A549 (cell line): ENCODE measurements at regions of chr5 and their contacts with region 1.

Region 1: GRCh38 chr5:172770675-172771438 is at the start of gene DUSP1:
- DNase-seq: peak; percentile 92 to 99
- ATAC-seq: peak; percentile 32 to 50
- H3K4me3 ChIP-seq: peak within 1 kb of the TSS; percentile 75
- H3K27ac ChIP-seq: peak within 1 kb of the TSS; percentile 97 to 100
- H3K4me1 ChIP-seq: peaks cover 42% of the 10 kb centered on the region
- CTCF ChIP-seq: peak; percentile 27; the same call in 1 of the 3 replicates
- EP300 ChIP-seq: peak; percentile 89 to 96
- POLR2A ChIP-seq: peak; percentile 99
- RAD21 ChIP-seq: peak; percentile 8 to 52
- polyA plus RNA-seq, gene DUSP1: 525 and 594 TPM in 2 replicates

Region 2: DNA sequence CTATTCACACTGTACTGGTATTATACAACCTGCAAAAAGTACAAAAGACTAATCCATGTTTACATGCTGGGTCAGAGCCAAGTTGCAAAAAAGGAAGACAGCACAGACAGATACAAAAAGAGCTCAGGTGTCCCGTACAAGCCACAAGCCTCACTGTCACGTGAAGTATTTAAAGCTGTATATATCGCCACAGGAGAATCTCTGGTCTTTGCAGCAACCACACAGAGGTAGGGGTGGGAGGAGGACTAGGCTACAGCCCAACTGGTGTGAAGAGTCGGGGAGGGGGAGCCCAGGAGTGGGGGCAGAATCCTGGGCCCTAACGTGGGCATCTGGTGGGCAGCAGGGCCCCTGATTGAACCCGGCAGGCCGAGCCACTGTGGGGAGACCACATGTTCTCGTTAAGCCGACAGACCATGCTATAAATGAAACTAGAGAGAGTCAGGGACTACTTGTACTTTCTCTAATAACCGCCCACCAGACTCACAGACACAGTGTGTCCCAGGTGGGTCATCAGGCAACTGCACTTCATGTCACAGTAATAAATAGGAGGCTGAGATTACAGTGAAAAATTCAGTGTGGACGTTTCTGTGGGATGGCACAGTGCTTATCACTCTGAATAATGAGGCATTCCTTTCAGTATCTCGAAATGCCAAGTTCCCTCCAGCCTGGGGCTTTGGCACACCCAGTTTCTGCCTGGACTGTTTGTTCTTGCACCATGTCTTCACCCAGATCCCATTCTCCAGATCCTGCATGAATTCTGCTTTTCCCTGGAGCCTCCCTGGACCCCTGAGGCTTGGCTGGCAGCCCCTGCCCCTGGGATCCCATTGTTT is 237.2 kb before region 1 on chr5:
- CTCF ChIA-PET with region 1: no interaction called
- POLR2A ChIA-PET with region 1: no interaction called
- DNase-seq: no peak
- ATAC-seq: peak; percentile 48 to 64; a peak in 4 of 6 replicates
- H3K4me3 ChIP-seq: no peak overlapping the region
- H3K27ac ChIP-seq: peak overlapping the region in 1 of 2 experiments; percentile 62; a peak in 1 of 6 replicates
- H3K4me1 ChIP-seq: peaks cover 21% of the 10 kb centered on the region; the same call in 2 of the 3 replicates
- CTCF ChIP-seq: no peak
- EP300 ChIP-seq: no peak
- POLR2A ChIP-seq: no peak
- RAD21 ChIP-seq: no peak

Region 3: GRCh38 chr5:172758083-172758833 is 12.6 kb before region 1 on chr5:
- CTCF ChIA-PET with region 1: interaction called, 4 read pairs
- POLR2A ChIA-PET with region 1: interaction called, 16 read pairs
- DNase-seq: peak; percentile 91 to 95
- ATAC-seq: peak; percentile 91 to 93
- H3K4me3 ChIP-seq: no peak overlapping the region
- H3K27ac ChIP-seq: peak overlapping the region; percentile 79 to 88
- H3K4me1 ChIP-seq: peaks cover 17% of the 10 kb centered on the region
- CTCF ChIP-seq: no peak
- EP300 ChIP-seq: no peak
- POLR2A ChIP-seq: no peak
- RAD21 ChIP-seq: no peak; a peak in 1 of 5 replicates

Region 4: GRCh38 chr5:172806897-172807672 is 36.2 kb after region 1 on chr5:
- CTCF ChIA-PET with region 1: interaction called, 6 read pairs
- POLR2A ChIA-PET with region 1: interaction called, 24 read pairs
- DNase-seq: peak; percentile 93 to 98
- ATAC-seq: peak; percentile 94 to 99
- H3K4me3 ChIP-seq: peak overlapping the region; percentile 29; the same call in 2 of the 3 replicates
- H3K27ac ChIP-seq: peak overlapping the region; percentile 87 to 93
- H3K4me1 ChIP-seq: peaks cover 30% of the 10 kb centered on the region
- CTCF ChIP-seq: no peak
- EP300 ChIP-seq: peak; percentile 60 to 75; a peak in 3 of 5 replicates
- POLR2A ChIP-seq: peak; percentile 29; the same call in 1 of the 2 replicates
- RAD21 ChIP-seq: 0 out of 5 replicates have a peak, but pooled peaks of 1 of the 2 experiments have one; percentile 17

Region 5: DNA sequence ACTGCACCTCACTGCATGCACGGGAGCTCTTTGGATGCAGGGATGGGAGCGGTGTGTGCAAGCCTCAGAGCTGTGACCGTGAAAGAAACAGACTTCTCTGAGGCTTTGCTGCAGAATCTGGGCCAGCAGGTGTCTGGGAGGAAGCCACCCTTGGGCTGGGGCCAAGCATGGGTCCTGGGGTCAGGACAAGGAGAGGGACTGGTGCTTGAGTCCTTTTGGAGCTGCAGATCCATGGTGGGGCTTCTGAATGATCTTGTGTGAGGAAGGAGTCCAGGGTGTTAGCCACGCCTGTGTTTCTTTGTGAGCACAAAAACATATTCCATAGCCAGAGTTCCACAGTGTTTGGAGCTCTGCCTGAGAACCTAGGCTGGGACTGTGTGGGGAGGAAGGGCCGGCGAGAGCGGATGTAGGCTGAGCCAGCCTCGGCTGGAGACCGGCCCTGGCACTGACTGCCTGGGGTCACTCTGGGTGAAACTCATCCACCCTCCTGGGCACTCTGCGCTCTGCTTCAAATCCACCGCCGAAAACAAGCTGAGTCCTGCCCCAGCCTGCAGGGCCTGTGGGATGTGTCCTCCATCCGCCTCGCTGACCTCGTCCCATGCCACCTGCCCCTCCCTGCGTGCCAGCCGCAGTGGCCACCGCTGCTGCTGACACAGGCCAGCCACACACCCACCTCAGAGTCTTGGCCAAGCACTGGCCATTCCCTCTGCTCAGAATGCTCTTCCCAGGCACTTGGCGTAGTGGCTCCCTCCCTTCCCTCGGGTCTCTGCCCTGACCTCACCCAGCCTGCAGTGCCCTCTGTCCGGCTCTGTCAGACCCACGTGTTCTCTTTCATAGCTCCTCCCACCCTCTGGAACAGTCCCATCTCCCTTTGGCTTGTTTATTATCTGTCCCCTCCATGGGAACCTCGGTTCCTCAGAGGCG is 89.9 kb after region 1 on chr5:
- CTCF ChIA-PET with region 1: interaction called, 5 read pairs
- POLR2A ChIA-PET with region 1: interaction called, 21 read pairs
- DNase-seq: no peak
- ATAC-seq: peak; percentile 8 to 23; a peak in 3 of 6 replicates
- H3K4me3 ChIP-seq: no peak overlapping the region
- H3K27ac ChIP-seq: peak overlapping the region; percentile 96 to 99
- H3K4me1 ChIP-seq: peaks cover 99% of the 10 kb centered on the region
- CTCF ChIP-seq: no peak
- EP300 ChIP-seq: no peak
- POLR2A ChIP-seq: no peak
- RAD21 ChIP-seq: no peak

Region 6: GRCh38 chr5:172902497-172903200 is 131.8 kb after region 1 on chr5:
- CTCF ChIA-PET with region 1: interaction called, 131 read pairs
- POLR2A ChIA-PET with region 1: interaction called, 87 read pairs
- DNase-seq: peak; percentile 82 to 99
- ATAC-seq: peak; percentile 48 to 65
- H3K4me3 ChIP-seq: no peak overlapping the region
- H3K27ac ChIP-seq: peak overlapping the region; percentile 99 to 100
- H3K4me1 ChIP-seq: peaks cover 98% of the 10 kb centered on the region
- CTCF ChIP-seq: peak; percentile 60
- EP300 ChIP-seq: peak; percentile 99 to 100; a peak in 4 of 5 replicates
- POLR2A ChIP-seq: no peak
- RAD21 ChIP-seq: peak; percentile 78 to 90

Region 7: DNA sequence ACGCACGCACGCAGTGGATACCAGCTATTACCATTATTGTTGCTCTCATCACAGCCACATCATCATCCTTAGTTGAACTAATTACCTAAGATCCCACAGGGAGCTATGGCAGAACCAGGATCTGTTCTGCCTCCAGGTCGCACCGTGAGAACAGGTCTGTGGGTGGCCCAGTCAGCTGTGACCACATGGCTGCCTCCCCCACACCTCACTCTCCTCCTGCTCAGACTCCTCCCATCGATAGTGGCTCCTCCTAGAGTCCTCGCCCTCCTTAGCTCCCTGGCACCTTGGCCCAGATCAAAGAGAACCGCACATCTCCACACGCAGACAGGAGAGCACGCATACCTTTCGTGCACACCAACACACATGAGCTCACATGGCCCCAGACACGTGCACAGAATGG is 155.9 kb after region 1 on chr5:
- CTCF ChIA-PET with region 1: interaction called, 25 read pairs
- POLR2A ChIA-PET with region 1: interaction called, 47 read pairs
- DNase-seq: peak in 1 of 2 experiments; percentile 60
- ATAC-seq: peak; percentile 18 to 28; a peak in 4 of 6 replicates
- H3K4me3 ChIP-seq: no peak overlapping the region
- H3K27ac ChIP-seq: peak overlapping the region; percentile 98 to 100
- H3K4me1 ChIP-seq: peaks cover 66% of the 10 kb centered on the region
- CTCF ChIP-seq: no peak
- EP300 ChIP-seq: no peak
- POLR2A ChIP-seq: no peak
- RAD21 ChIP-seq: no peak